Transverse colon (tissue), 4 donors: ENCODE measurements at regions of chr19 and their contacts with region 1.

Region 1: GRCh38 chr19:51660975-51661600 is 14.5 kb upstream of the SIGLEC14 start:
- DNase-seq: peak; percentile 56
- H3K4me3 ChIP-seq: no peak overlapping the region
- H3K27ac ChIP-seq: no peak overlapping the region
- H3K4me1 ChIP-seq: peaks cover 0 to 6% (median 1%) of the 10 kb centered on the region in 4 donors
- H3K27me3 ChIP-seq: peaks cover 28% of the 10 kb centered on the region
- CTCF ChIP-seq: peak in 4 of 5 experiments; percentile 23 to 46 (median 41)
- EP300 ChIP-seq: no peak
- POLR2A ChIP-seq: no peak

Region 2: GRCh38 chr19:51473009-51473707 is 187.9 kb before region 1 on chr19:
- in situ Hi-C with region 1: loop called (anchors 5 to 25 kb)
- intact Hi-C with region 1: loop called (anchors 10 kb)
- DNase-seq: peak; percentile 78
- H3K4me3 ChIP-seq: no peak overlapping the region
- H3K27ac ChIP-seq: no peak overlapping the region
- H3K4me1 ChIP-seq: peaks cover 0 to under 1% (median 0%) of the 10 kb centered on the region in 4 donors
- H3K27me3 ChIP-seq: peaks cover 6% of the 10 kb centered on the region
- CTCF ChIP-seq: peak; percentile 67 to 87 (median 84)
- EP300 ChIP-seq: no peak
- POLR2A ChIP-seq: no peak

Region 3: DNA sequence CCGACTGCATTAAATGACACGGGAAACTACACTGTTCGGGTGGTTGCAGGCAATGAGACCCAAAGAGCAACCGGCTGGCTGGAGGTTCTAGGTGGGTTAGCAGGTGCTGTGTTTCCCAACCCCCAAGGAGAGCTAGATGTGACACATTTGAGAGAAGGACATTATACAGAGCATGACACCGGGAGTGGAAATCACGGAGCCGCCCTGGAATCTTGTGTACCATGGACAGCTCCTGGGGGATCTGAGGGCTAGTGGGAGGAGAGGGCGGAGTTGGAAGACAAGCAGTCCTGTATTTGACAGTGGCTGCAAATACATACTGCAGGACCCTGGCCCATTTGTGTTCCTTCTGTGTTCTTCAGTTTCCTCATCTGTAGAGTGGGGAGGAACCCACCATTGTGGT is 180.5 kb before region 1 on chr19:
- in situ Hi-C with region 1: loop called in 2 of 4 experiments (anchors 10 to 25 kb)
- intact Hi-C with region 1: loop called (anchors 10 kb)
- DNase-seq: no peak
- H3K4me3 ChIP-seq: no peak overlapping the region
- H3K27ac ChIP-seq: no peak overlapping the region
- H3K4me1 ChIP-seq: peaks cover 0 to 5% (median 0%) of the 10 kb centered on the region in 4 donors
- H3K27me3 ChIP-seq: peaks cover 10% of the 10 kb centered on the region
- CTCF ChIP-seq: no peak
- EP300 ChIP-seq: no peak
- POLR2A ChIP-seq: no peak

Region 4: GRCh38 chr19:51621178-51621577 is 39.9 kb before region 1 on chr19:
- in situ Hi-C with region 1: no loop called
- intact Hi-C with region 1: no loop called
- DNase-seq: no peak
- H3K4me3 ChIP-seq: no peak overlapping the region
- H3K27ac ChIP-seq: no peak overlapping the region
- H3K4me1 ChIP-seq: no peaks in the 10 kb centered on the region
- H3K27me3 ChIP-seq: no peaks in the 10 kb centered on the region
- CTCF ChIP-seq: no peak
- EP300 ChIP-seq: no peak
- POLR2A ChIP-seq: no peak

Region 5: GRCh38 chr19:51726049-51726448 is 65.0 kb after region 1 on chr19:
- in situ Hi-C with region 1: no loop called
- intact Hi-C with region 1: loop called (anchors 10 kb)
- DNase-seq: peak; percentile 17
- H3K4me3 ChIP-seq: no peak overlapping the region
- H3K27ac ChIP-seq: no peak overlapping the region
- H3K4me1 ChIP-seq: no peaks in the 10 kb centered on the region
- H3K27me3 ChIP-seq: peaks cover 44% of the 10 kb centered on the region
- CTCF ChIP-seq: no peak
- EP300 ChIP-seq: no peak
- POLR2A ChIP-seq: no peak

Region 6: DNA sequence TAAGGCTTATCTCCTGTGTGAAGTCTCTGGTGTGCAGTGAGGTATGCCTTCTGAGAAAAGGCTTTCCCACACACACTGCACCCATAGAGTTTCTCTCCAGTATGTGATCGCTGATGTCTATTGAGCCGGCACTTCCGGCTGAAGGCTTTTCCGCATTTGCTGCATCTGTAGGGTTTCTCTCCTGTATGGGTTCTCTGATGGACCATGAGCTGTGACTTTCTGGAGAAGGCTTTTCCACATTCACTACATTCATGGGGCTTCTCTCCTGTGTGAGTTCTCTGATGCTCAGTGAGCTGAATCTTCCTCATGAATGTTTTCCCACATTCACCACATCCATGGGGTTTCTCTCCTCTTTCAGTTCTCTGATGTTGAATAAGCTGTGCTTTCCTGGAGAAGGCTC is 212.0 kb after region 1 on chr19:
- in situ Hi-C with region 1: no loop called
- intact Hi-C with region 1: no loop called
- DNase-seq: no peak
- H3K4me3 ChIP-seq: no peak overlapping the region
- H3K27ac ChIP-seq: no peak overlapping the region
- H3K4me1 ChIP-seq: no peaks in the 10 kb centered on the region
- H3K27me3 ChIP-seq: no peaks in the 10 kb centered on the region
- CTCF ChIP-seq: no peak
- EP300 ChIP-seq: no peak
- POLR2A ChIP-seq: no peak